Right cardiac atrium (tissue), 5 donors: ENCODE measurements at regions of chr6 and their contacts with region 1.

Region 1: DNA sequence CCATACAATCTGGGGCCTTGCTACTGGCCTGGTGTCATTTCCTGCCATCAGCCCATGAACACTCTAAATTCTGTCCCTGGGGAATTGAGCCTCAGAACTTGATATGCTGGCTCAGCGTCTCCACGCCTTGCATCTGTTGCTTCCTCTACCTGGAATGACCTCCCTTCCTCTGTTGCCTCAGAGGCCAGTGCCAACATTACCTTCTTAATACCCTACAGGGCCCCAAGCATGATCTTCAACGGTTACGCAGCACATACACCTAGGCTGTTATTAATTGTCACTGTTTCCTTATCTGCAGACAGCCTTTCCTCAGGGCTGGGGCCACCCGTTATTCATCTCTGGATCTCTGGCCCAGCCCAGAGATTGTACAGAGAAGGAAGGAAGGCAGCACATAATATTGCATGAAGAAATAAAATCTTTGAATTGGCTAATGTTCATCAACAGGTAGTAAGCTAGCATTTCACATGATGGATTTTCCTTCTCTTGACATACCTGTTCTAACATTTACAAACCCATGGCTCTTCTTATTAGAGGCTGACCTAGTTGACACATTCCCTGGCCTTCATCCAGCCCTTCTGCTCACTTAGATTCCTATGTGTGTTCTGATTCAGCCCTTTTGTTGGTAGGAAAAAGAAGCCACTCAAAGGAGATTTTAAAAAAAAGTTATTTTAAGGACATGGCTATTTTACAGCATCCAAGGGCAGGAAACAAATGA is 8.4 kb upstream of the RNF182 start:
- DNase-seq: no peak
- ATAC-seq: no peak
- H3K4me3 ChIP-seq: no peak overlapping the region
- H3K27ac ChIP-seq: no peak overlapping the region
- H3K4me1 ChIP-seq: no peaks in the 10 kb centered on the region
- H3K27me3 ChIP-seq: no peaks in the 10 kb centered on the region

Region 2: GRCh38 chr6:14046476-14047068 is 130.2 kb after region 1 on chr6:
- intact Hi-C with region 1: loop called in 1 of 4 experiments (anchors 10 kb)
- DNase-seq: no peak
- ATAC-seq: no peak
- H3K4me3 ChIP-seq: no peak overlapping the region
- H3K27ac ChIP-seq: no peak overlapping the region
- H3K4me1 ChIP-seq: no peaks in the 10 kb centered on the region
- H3K27me3 ChIP-seq: no peaks in the 10 kb centered on the region

Region 3: DNA sequence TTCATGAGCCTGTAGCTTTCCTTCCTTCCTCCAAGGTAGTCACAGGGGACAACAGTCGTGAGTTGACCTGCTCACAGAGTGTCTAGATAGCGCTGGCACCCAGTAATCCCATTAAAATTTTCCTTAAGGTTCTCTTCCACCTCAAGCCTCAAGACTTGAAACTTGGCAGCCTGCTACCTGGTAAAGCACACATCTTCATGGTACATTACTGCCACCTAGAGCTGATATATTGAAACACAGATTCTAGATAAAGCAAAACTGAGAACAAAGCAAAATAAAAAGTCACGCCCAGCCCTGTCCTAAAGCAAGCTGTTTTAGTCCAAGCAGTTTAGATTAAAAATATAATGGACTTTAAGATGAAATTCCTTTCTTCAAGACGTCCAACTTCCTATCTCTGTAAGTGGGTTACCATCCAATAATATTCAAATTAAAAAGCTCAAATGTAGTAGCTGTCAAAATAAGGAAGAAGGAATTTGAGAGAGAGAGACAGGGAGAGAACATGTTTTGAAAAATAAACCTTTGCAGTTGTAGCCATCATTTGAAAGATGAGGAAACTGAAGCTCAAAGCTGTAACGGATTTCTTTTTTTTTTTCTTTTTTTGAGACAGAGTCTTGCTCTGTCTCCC is 150.5 kb after region 1 on chr6:
- intact Hi-C with region 1: loop called in 1 of 4 experiments (anchors 5 kb)
- DNase-seq: no peak
- ATAC-seq: peak; percentile 59 to 83
- H3K4me3 ChIP-seq: no peak overlapping the region
- H3K27ac ChIP-seq: no peak overlapping the region
- H3K4me1 ChIP-seq: no peaks in the 10 kb centered on the region
- H3K27me3 ChIP-seq: no peaks in the 10 kb centered on the region

Region 4: DNA sequence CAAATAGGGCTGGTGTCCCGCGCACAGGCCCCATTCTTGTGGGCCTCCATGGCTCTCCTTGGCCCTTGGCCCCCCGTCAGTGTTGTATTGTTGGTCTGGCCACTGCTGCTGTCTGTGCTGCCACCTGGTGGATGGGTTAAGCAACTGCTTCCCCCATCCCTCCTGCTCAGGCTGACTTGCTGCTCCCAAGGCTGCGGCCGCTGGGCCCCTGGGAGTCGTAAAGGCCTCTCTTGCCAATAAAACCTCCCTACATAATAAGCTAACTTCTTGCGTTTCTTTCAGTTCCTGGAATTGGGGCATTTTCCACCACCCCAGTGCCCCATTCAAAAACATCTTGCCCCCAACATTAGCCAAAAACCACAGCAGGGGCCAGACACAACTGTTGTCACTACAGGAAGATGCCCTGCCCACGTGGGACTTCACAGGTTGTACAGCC is 228.3 kb after region 1 on chr6:
- intact Hi-C with region 1: loop called in 1 of 4 experiments (anchors 10 kb)
- DNase-seq: peak; percentile 63 to 83 (median 75)
- ATAC-seq: peak; percentile 59 to 87
- H3K4me3 ChIP-seq: no peak overlapping the region
- H3K27ac ChIP-seq: no peak overlapping the region
- H3K4me1 ChIP-seq: no peaks in the 10 kb centered on the region
- H3K27me3 ChIP-seq: no peaks in the 10 kb centered on the region